Mammary epithelial cell (primary cell): ENCODE measurements at regions of chr4 and their contacts with region 1.

Region 1: DNA sequence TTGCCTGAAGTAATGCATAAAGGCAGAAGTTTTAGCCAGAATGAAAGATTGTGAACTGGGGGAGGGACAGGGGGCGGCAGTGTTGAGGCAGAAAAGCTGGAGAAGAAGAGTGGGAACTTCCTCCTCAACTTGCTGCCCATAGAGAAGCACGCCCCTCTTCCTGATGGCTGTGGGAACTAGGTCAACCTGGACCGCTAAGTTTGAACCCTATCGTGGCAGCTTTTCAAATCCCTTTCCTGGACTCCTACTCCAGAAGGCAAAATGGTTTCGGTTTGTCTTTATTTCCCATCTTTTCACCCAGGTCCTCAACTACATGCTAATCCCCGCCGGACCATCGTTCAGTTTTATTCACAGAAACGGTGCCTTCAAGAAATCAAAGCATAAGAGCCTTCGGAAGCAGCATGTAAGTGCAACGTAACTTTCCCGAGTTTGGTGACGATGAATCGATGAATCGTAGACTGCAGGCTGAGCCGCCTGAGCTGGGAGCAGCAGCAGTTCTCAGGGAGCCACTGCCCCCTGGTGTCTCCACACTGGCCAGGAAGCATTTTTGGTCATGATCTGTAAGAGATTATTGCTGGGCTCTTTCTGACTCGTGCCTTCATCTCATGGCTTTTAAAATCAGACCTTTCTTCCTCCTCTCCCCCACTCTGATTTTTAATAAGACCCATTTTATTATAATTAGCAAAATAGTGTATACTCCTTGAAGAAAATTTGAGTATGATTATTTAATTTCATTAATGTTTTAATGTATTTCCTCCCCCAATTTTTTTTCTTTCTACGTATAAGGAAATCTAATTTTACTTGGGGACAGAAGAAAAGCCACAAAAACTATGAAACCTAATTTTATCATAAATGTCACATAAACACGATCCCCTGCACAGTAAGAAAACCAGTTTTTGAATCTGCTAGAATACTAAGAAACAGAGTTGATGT is 21.4 kb downstream of the SPINK2 start:
- DNase-seq: peak; percentile 70
- H3K4me3 ChIP-seq: peak overlapping the region; percentile 65 to 75 (median 74)
- H3K27ac ChIP-seq: no peak overlapping the region
- H3K4me1 ChIP-seq: no peaks in the 10 kb centered on the region
- H3K27me3 ChIP-seq: no peaks in the 10 kb centered on the region
- CTCF ChIP-seq: peak; percentile 80 to 95

Region 2: GRCh38 chr4:56229947-56230346 is 570.1 kb before region 1 on chr4:
- CTCF ChIA-PET with region 1: no interaction called
- dilution Hi-C with region 1: no loop called
- in situ Hi-C with region 1: no loop called
- intact Hi-C with region 1: no loop called
- DNase-seq: no peak
- H3K4me3 ChIP-seq: no peak overlapping the region
- H3K27ac ChIP-seq: no peak overlapping the region
- H3K4me1 ChIP-seq: no peaks in the 10 kb centered on the region
- H3K27me3 ChIP-seq: no peaks in the 10 kb centered on the region
- CTCF ChIP-seq: no peak

Region 3: DNA sequence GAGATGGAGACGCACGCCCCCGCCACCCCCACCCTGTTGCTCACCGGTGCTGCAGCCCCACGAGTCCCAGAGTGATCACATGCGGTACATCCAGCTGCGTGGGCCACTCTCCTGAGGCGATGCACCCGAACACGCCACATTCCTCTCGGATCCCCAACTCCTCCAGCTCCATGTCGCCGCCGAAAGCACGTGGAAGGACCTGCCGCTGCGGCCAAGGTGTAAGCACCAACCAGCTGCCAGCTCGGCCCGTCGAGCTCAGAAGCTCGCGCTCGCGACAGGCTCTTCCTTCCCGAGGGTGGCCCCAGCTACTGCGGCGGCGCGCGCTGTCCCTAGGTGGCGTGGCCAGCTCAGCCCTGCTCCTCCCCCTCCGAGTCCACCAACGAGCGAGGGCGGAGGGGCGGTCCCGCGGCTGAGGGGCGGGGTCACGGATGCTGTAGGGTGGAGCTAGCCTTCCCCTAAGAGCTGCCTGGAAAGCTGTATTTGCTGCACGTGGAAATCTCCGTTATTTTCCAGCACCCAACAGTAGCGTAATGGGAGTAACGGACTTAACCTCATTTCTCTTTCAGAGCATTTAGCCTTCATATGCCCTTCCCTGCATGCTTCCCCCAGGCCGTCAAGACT is 364.7 kb before region 1 on chr4 and contains the start of gene PPAT:
- CTCF ChIA-PET with region 1: no interaction called
- dilution Hi-C with region 1: no loop called
- in situ Hi-C with region 1: no loop called
- intact Hi-C with region 1: loop called (anchors 2 kb)
- DNase-seq: peak; percentile 99
- H3K4me3 ChIP-seq: peak within 1 kb of the TSS; percentile 85 to 89 (median 88)
- H3K27ac ChIP-seq: peak within 1 kb of the TSS; percentile 95
- H3K4me1 ChIP-seq: peaks cover 9% of the 10 kb centered on the region
- H3K27me3 ChIP-seq: no peaks in the 10 kb centered on the region
- CTCF ChIP-seq: no peak
- total RNA-seq, gene PPAT: 20.0 to 28.4 TPM

Region 4: GRCh38 chr4:56505269-56506130 is 294.6 kb before region 1 on chr4 and contains the start of gene ARL9:
- CTCF ChIA-PET with region 1: no interaction called
- dilution Hi-C with region 1: no loop called
- in situ Hi-C with region 1: loop called in 1 of 2 experiments (anchors 25 kb)
- intact Hi-C with region 1: loop called (anchors 1 kb)
- DNase-seq: peak; percentile 45
- H3K4me3 ChIP-seq: peak within 1 kb of the TSS; percentile 33 to 50 (median 40)
- H3K27ac ChIP-seq: no peak within 1 kb of the TSS
- H3K4me1 ChIP-seq: peaks cover 12% of the 10 kb centered on the region
- H3K27me3 ChIP-seq: no peaks in the 10 kb centered on the region
- CTCF ChIP-seq: no peak
- total RNA-seq, gene ARL9: 0.17 to 0.42 TPM

Region 5: GRCh38 chr4:56544573-56545131 is 255.4 kb before region 1 on chr4:
- CTCF ChIA-PET with region 1: no interaction called
- dilution Hi-C with region 1: no loop called
- in situ Hi-C with region 1: no loop called
- intact Hi-C with region 1: loop called (anchors 1 kb)
- DNase-seq: peak; percentile 70
- H3K4me3 ChIP-seq: peak overlapping the region; percentile 29 to 52 (median 46)
- H3K27ac ChIP-seq: no peak overlapping the region
- H3K4me1 ChIP-seq: no peaks in the 10 kb centered on the region
- H3K27me3 ChIP-seq: no peaks in the 10 kb centered on the region
- CTCF ChIP-seq: peak; percentile 83 to 99

Region 6: GRCh38 chr4:56575820-56576429 is 224.2 kb before region 1 on chr4:
- CTCF ChIA-PET with region 1: interaction called, 6 read pairs
- dilution Hi-C with region 1: no loop called
- in situ Hi-C with region 1: no loop called
- intact Hi-C with region 1: loop called (anchors 1 kb)
- DNase-seq: peak; percentile 8
- H3K4me3 ChIP-seq: no peak overlapping the region
- H3K27ac ChIP-seq: no peak overlapping the region
- H3K4me1 ChIP-seq: no peaks in the 10 kb centered on the region
- H3K27me3 ChIP-seq: peaks cover 8% of the 10 kb centered on the region
- CTCF ChIP-seq: peak; percentile 50 to 60

Region 7: DNA sequence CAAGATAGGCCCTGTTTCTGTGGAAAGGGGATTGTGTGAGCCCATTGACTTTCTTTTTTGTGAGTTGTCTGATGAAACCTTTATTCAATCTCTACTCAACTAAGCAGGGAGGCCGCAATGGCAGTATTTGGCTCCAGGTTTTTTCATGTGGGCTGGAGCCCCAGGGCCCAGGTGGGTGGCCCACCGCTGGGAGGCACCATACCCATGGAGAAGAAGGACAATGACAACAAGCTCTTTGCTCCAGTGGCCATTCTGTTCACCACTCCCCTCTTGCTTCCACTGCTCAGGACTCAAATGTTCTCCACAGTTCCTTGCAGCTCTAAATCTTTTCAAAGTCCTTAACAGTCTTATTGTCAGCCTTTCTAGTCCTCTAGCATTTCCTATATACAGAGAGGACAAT is 173.1 kb before region 1 on chr4:
- CTCF ChIA-PET with region 1: no interaction called
- dilution Hi-C with region 1: no loop called
- in situ Hi-C with region 1: no loop called
- intact Hi-C with region 1: loop called (anchors 1 kb)
- DNase-seq: no peak
- H3K4me3 ChIP-seq: no peak overlapping the region
- H3K27ac ChIP-seq: no peak overlapping the region
- H3K4me1 ChIP-seq: peaks cover 21% of the 10 kb centered on the region
- H3K27me3 ChIP-seq: no peaks in the 10 kb centered on the region
- CTCF ChIP-seq: no peak

Region 8: GRCh38 chr4:56668298-56668697 is 131.8 kb before region 1 on chr4:
- CTCF ChIA-PET with region 1: interaction called, 4 read pairs
- dilution Hi-C with region 1: no loop called
- in situ Hi-C with region 1: loop called in 1 of 2 experiments (anchors 10 kb)
- intact Hi-C with region 1: loop called (anchors 1 kb)
- DNase-seq: no peak
- H3K4me3 ChIP-seq: no peak overlapping the region
- H3K27ac ChIP-seq: no peak overlapping the region
- H3K4me1 ChIP-seq: no peaks in the 10 kb centered on the region
- H3K27me3 ChIP-seq: peaks cover 24% of the 10 kb centered on the region
- CTCF ChIP-seq: peak; percentile 42 to 60